ENCODE measurements at regions of chr11 and their contacts with region 1.

Region 1: DNA sequence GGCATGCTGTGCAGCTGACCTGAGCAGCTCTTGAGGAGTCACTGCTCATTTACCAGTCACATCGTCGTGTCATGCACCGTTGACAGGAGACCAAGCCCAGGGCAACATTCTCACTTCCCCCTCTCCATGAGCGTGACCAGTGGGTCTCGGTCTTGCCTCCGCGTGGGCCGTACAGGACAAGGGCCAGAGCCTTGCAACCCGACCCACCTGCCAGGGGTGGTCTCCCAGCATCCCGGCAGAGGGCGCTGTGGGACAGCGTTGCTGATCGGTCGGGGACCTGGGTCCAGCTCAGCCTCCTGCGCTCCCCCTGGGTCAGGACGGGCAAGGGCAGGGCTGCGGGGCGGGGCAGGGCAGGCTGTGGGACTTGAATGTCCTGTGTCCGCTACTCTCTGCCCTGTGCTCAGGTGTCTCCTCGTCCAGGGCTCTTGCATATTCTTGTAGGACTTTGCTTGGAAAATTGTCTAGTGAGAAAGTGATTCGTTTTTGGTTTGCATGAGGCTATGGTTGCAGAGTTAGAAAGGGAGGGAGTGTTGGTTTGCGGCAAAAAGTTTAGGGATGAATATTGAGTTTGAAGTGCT is 16.2 kb downstream of the EIF4G2 start:
- DNase-seq: peak; percentile 87 to 94 (median 92)
- ATAC-seq: peak; percentile 91 to 96 (median 92)
- H3K4me3 ChIP-seq: peak overlapping the region in 5 of 12 donors; percentile 3 to 41 (median 10)
- H3K27ac ChIP-seq: no peak overlapping the region
- H3K4me1 ChIP-seq: peaks cover 0 to 17% (median 5%) of the 10 kb centered on the region in 12 donors
- H3K27me3 ChIP-seq: no peaks in the 10 kb centered on the region
- CTCF ChIP-seq: peak; percentile 85 to 98 (median 92)
- POLR2A ChIP-seq: no peak

Region 2: GRCh38 chr11:10911907-10912306 is 119.4 kb after region 1 on chr11:
- intact Hi-C with region 1: loop called in 5 of 10 experiments (anchors 5 kb)
- DNase-seq: no peak
- ATAC-seq: peak; percentile 7 to 42 (median 30)
- H3K4me3 ChIP-seq: peak overlapping the region in 1 of 12 donors; percentile 18
- H3K27ac ChIP-seq: peak overlapping the region in 6 of 12 donors; percentile 30 to 65 (median 42)
- H3K4me1 ChIP-seq: peaks cover 0 to 26% (median 8%) of the 10 kb centered on the region in 12 donors
- H3K27me3 ChIP-seq: no peaks in the 10 kb centered on the region
- CTCF ChIP-seq: peak in 3 of 12 donors; percentile 7 to 28 (median 11)
- POLR2A ChIP-seq: no peak

Region 3: DNA sequence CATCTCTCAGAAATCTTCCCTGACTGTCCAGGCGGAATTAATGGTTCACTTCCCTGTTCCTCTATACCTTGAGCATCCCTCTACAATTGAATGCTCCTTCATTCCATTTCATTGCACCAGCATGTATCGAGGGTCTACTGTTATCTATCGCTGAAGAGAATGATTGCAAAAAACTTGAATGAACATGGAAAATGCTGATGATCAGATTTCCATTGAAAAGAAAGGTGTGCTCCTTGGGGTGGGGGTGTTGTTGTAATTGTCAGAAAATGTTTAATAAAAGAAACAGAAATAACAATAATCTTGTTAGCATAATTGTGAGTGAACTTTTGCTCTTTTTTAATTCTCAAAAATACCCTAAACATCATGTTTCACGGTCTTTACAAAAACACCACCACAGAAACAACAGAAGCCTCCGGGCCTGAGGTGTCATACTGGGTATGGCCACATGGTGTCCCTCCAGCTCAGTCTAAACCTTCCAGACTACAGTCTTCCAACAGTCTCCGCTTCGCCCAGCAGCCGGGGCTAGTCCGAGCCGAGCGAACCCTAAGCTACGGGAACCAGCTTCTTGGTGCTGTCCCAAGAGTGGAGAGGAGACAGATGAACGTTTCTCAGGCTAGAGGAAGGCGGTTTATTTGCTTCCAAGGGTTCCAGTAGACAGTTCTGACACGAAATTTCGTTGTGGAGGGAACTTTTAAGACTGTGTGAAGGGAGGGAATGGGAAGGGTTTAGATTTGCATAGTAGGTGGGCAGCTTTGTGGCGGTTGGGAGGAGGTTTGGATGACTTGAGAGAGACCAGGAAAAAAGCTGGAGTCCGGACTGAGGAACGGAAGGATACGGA is 141.2 kb after region 1 on chr11:
- intact Hi-C with region 1: loop called in 5 of 10 experiments (anchors 5 to 10 kb)
- DNase-seq: peak; percentile 88 to 93 (median 91)
- ATAC-seq: peak; percentile 83 to 95 (median 92)
- H3K4me3 ChIP-seq: peak overlapping the region in 11 of 12 donors; percentile 27 to 60 (median 50)
- H3K27ac ChIP-seq: peak overlapping the region in 11 of 12 donors; percentile 30 to 84 (median 73)
- H3K4me1 ChIP-seq: peaks cover 0 to 24% (median 6%) of the 10 kb centered on the region in 12 donors
- H3K27me3 ChIP-seq: peaks cover 0 to 12% (median 0%) of the 10 kb centered on the region in 9 donors
- CTCF ChIP-seq: peak; percentile 88 to 99 (median 96)
- POLR2A ChIP-seq: peak in 1 of 2 donors; percentile 30

Region 4: DNA sequence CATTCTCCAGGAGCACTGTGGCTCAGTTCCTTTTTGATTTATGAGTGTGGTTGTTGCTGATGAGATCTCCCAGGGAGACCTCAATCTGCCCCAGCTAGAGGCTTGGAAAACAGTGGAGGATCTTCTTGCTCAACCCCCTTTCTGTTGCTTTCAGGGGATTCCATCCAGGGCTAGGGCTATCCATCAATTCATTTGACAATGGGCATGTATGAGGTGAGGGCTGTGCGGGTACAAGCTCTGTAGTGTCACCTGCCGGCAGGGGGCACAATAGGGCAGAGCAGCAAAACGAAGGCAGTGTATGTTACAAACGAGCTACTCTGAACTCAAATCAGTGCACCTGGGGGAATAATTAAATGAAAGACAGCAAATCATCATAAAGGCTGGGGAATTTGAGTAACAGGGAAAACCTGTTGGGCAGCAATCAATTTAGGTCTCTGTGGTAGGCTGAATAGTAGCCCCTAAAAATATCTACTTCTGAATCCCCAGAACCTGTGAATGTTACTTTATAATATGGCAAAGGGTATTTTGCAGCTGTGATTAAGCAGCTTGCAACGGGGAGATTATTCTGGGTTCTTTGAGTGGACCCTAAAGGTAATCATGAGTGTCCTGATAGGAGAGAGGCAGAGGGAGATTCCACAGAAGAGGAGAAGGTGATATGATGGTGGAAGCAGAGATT is 235.7 kb after region 1 on chr11:
- intact Hi-C with region 1: loop called in 9 of 10 experiments (anchors 2 to 5 kb)
- DNase-seq: peak; percentile 45 to 79 (median 55)
- ATAC-seq: peak in 3 of 4 donors; percentile 69 to 89 (median 71)
- H3K4me3 ChIP-seq: no peak overlapping the region
- H3K27ac ChIP-seq: no peak overlapping the region
- H3K4me1 ChIP-seq: no peaks in the 10 kb centered on the region
- H3K27me3 ChIP-seq: peaks cover 0 to 4% (median 0%) of the 10 kb centered on the region in 9 donors
- CTCF ChIP-seq: peak; percentile 66 to 82 (median 75)
- POLR2A ChIP-seq: no peak

Measured in heart left ventricle (tissue), 16 donors.